Activated CD4-positive, alpha-beta memory T cell treated with anti-CD3 and anti-CD28 coated beads, Interleukin-2, amount 10 ng/mL, durations not matched to agents 7 days and 5 days (primary cell): ENCODE measurements at regions of chr12 and their contacts with region 1.

Region 1: GRCh38 chr12:52250048-52250990 is 17.3 kb downstream of the KRT7 start:
- DNase-seq: no peak
- H3K4me3 Mint-ChIP-seq: no peak overlapping the region
- H3K27ac Mint-ChIP-seq: peak overlapping the region; percentile 10
- H3K4me1 Mint-ChIP-seq: peaks cover 69% of the 10 kb centered on the region
- H3K27me3 Mint-ChIP-seq: peaks cover 12% of the 10 kb centered on the region

Region 2: DNA sequence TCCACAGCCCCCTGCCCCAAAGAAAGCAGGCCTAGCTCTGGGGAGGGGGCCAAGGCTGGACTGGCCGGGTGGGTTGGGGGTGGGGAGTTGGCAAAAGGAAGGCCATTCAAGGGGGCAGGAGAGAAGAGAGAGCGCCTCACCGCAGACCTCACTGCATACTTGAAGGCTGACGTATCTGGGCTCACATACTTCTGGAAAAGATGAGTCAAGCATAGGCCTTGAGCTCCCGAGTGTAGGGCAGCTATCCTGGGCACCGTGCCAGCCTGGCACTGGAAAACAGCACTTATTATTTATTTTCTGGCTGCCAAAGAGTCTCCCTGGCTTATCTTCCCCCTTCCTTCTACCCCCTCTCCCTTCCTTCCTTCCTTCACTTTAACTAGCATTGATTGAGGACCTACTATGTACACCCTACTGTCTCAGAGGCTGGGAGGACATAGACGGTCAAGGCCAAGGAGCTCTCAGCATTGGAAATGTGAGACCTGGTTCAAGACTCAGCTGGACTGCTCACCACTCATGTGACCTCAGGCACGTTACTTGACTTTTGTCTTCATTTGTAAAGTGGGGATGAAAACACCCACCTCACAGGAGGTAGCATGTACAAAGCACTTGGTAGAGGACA is 58.0 kb before region 1 on chr12:
- CTCF ChIA-PET with region 1: no interaction called
- POLR2A ChIA-PET with region 1: no interaction called
- DNase-seq: peak; percentile 21
- H3K4me3 Mint-ChIP-seq: no peak overlapping the region
- H3K27ac Mint-ChIP-seq: no peak overlapping the region
- H3K4me1 Mint-ChIP-seq: peaks cover 10% of the 10 kb centered on the region
- H3K27me3 Mint-ChIP-seq: peaks cover 6% of the 10 kb centered on the region

Region 3: GRCh38 chr12:52235822-52236692 is 14.3 kb before region 1 on chr12:
- CTCF ChIA-PET with region 1: interaction called, 5 read pairs
- POLR2A ChIA-PET with region 1: interaction called, 16 read pairs
- DNase-seq: no peak
- H3K4me3 Mint-ChIP-seq: no peak overlapping the region
- H3K27ac Mint-ChIP-seq: no peak overlapping the region
- H3K4me1 Mint-ChIP-seq: no peaks in the 10 kb centered on the region
- H3K27me3 Mint-ChIP-seq: peaks cover 41% of the 10 kb centered on the region